Caco-2 (cell line): ENCODE measurements at regions of chr11 and their contacts with region 1.

Region 1: DNA sequence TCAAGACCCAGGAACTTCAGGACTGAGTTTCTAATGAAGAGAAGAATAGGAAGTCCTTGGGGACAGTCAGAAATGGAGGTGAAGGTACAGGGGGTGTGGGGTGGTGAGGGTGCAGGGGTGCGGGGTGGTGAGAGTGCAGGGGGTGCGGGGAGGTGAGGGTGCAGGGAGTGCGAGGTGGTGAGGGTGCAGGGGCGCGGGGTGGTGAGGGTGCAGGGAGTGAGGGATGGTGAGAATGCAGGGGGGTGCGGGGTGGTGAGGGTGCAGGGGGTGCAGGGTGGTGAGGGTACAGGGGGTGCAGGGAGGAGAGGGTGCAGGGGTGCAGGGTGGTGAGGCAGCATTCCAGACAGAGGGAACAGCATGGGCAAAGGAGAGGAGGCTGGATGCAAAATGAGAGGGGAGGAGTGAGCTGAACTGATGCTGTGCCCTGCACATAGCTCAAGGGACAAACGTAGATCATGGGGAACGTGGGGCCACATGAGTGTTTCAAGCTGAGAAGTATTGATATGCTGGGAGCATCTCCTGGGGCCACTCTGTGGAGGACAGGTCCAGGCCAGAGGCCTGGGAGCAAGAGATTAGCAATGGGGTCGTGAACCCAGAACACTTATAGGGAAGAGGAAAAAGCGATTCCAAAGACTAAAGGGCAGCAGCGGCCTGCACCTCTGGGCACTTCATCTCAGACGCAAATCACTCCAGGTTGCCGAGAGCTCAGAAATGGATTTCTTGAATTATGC is 23.7 kb upstream of the DAGLA start:
- DNase-seq: no peak
- H3K4me3 ChIP-seq: no peak overlapping the region
- H3K4me3 Mint-ChIP-seq: peak overlapping the region; percentile 56
- H3K27ac Mint-ChIP-seq: peak overlapping the region; percentile 97
- H3K4me1 ChIP-seq: peaks cover 76% of the 10 kb centered on the region
- H3K4me1 Mint-ChIP-seq: peaks cover 59% of the 10 kb centered on the region
- H3K27me3 ChIP-seq: no peaks in the 10 kb centered on the region
- H3K27me3 Mint-ChIP-seq: no peaks in the 10 kb centered on the region
- CTCF ChIP-seq: no peak

Region 2: GRCh38 chr11:61555051-61555969 is 101.2 kb before region 1 on chr11:
- CTCF ChIA-PET with region 1: no interaction called
- POLR2A ChIA-PET with region 1: no interaction called
- intact Hi-C with region 1: no loop called
- DNase-seq: no peak
- H3K4me3 ChIP-seq: no peak overlapping the region
- H3K4me3 Mint-ChIP-seq: no peak overlapping the region
- H3K27ac Mint-ChIP-seq: no peak overlapping the region
- H3K4me1 ChIP-seq: no peaks in the 10 kb centered on the region; the same call in 1 of the 2 replicates
- H3K4me1 Mint-ChIP-seq: peaks cover 17% of the 10 kb centered on the region
- H3K27me3 ChIP-seq: no peaks in the 10 kb centered on the region
- H3K27me3 Mint-ChIP-seq: no peaks in the 10 kb centered on the region
- CTCF ChIP-seq: no peak

Region 3: GRCh38 chr11:61667684-61668305 is 11.3 kb after region 1 on chr11:
- CTCF ChIA-PET with region 1: interaction called, 12 read pairs
- POLR2A ChIA-PET with region 1: interaction called, 6 read pairs
- intact Hi-C with region 1: no loop called
- DNase-seq: peak; percentile 43 to 54
- H3K4me3 ChIP-seq: peak overlapping the region; percentile 47
- H3K4me3 Mint-ChIP-seq: peak overlapping the region; percentile 84
- H3K27ac Mint-ChIP-seq: peak overlapping the region; percentile 88
- H3K4me1 ChIP-seq: peaks cover 46% of the 10 kb centered on the region
- H3K4me1 Mint-ChIP-seq: peaks cover 21% of the 10 kb centered on the region
- H3K27me3 ChIP-seq: no peaks in the 10 kb centered on the region
- H3K27me3 Mint-ChIP-seq: no peaks in the 10 kb centered on the region
- CTCF ChIP-seq: peak; percentile 24 to 36